ENCODE measurements at regions of chrX and their contacts with region 1.

Region 1: DNA sequence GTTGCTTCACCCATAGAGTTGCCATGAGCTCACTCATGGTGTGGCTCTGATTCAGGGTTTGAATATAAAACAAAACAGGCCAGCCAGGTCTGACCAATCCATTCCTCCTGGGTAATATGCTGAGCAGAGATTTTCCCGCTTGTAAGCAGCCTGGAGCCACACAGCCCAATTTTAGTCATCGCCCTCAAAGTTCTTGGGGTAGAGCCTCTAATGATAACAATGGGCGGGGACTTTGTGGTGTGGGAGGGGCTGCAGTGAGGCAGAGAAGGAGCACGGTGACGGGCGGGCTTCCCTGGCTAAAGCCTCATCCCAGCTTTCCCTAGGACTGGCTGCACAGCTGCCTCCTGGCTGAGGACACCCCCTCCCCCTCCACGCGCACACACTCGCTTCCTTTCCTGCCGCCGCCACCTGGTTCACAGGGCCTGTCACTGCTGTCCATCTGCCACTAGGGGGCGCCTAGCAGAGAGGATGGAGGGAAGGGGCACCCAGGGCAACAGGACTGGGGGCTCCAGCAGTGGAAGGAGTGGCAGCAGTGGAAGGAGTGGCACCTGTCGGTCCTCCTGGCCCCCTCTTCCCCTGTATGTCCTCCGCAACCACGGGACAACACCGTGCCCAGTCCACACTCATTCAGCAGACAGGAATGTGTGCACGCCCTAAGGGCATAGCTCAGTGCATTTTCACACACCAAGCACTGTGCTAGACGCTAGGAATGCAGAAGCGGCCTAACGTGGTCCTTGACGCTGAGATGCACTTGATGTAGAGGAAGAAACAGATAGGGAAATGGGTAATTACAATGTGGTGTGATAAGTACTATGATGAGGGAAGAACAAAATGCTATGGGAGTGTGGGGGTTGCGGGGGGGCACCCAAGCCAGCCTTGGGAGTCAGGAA is 26.8 kb downstream of the PRPS1 start:
- DNase-seq: peak; percentile 49 to 86
- H3K4me3 ChIP-seq: no peak overlapping the region
- H3K4me1 ChIP-seq: peaks cover 11% of the 10 kb centered on the region
- H3K27me3 ChIP-seq: no peaks in the 10 kb centered on the region

Region 2: DNA sequence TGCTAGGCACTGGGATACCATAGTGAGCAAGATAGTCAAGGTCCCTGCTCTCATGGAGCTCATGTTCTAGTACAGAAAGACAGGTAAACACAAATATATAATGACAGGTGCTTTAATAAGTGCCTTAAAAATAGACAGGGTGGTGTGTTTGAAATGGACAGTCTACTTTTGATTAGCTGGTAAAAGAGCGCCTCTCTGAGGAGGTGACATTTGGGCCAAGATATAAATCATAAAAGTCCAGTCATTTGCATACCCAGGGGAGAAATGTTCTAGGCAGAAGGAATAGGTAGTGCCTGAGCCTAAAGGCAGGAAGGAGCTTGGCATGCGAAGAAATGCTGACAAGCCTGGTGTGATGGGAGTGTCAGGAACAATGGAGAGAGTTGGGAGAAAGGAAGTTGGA is 365.1 kb before region 1 on chrX:
- in situ Hi-C with region 1: no loop called
- DNase-seq: no peak
- H3K4me3 ChIP-seq: no peak overlapping the region
- H3K4me1 ChIP-seq: no peaks in the 10 kb centered on the region
- H3K27me3 ChIP-seq: 0 out of 2 replicates have a peak, but pooled peaks cover 2% of the 10 kb centered on the region

Region 3: GRCh38 chrX:107787827-107788226 is 132.7 kb after region 1 on chrX:
- in situ Hi-C with region 1: no loop called
- DNase-seq: no peak
- H3K4me3 ChIP-seq: no peak overlapping the region
- H3K4me1 ChIP-seq: no peaks in the 10 kb centered on the region
- H3K27me3 ChIP-seq: peaks cover 25% of the 10 kb centered on the region

Region 4: GRCh38 chrX:107880054-107880610 is 225.0 kb after region 1 on chrX:
- in situ Hi-C with region 1: no loop called
- DNase-seq: no peak
- H3K4me3 ChIP-seq: no peak overlapping the region
- H3K4me1 ChIP-seq: no peaks in the 10 kb centered on the region
- H3K27me3 ChIP-seq: no peaks in the 10 kb centered on the region

Region 5: GRCh38 chrX:107894038-107894437 is 238.9 kb after region 1 on chrX:
- in situ Hi-C with region 1: loop called (anchors 10 kb)
- DNase-seq: peak; percentile 49 to 64
- H3K4me3 ChIP-seq: no peak overlapping the region
- H3K4me1 ChIP-seq: no peaks in the 10 kb centered on the region
- H3K27me3 ChIP-seq: no peaks in the 10 kb centered on the region

Region 6: DNA sequence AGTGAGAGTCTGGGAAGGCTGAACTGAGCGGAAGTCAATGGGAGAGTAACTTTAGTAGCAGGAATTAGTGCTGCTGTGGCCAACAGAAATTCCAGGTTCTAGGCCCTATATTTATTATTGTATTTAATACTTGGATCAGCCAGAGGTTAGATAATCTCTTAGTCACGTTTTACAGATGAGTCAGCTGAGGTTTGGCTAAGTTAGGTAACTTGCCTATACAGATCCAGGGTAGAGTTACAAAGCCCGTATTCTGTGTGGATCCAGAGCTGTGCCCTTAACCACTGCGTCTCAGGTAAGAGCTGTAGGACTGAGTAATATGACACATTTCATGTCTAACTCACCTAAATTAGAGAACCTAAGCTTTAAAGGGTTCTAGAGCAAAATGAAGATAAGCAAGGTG is 415.8 kb after region 1 on chrX:
- in situ Hi-C with region 1: loop called (anchors 25 kb)
- DNase-seq: no peak
- H3K4me3 ChIP-seq: no peak overlapping the region
- H3K4me1 ChIP-seq: no peaks in the 10 kb centered on the region
- H3K27me3 ChIP-seq: peaks cover 56% of the 10 kb centered on the region

Measured in HAP-1 (cell line).